ENCODE measurements at regions of chr18 and their contacts with region 1.

Region 1: GRCh38 chr18:46660955-46661749 is 4.1 kb upstream of the LOXHD1 start:
- DNase-seq: no peak
- H3K4me3 Mint-ChIP-seq: no peak overlapping the region
- H3K27ac Mint-ChIP-seq: no peak overlapping the region
- H3K4me1 Mint-ChIP-seq: no peaks in the 10 kb centered on the region
- H3K27me3 Mint-ChIP-seq: peaks cover 4% of the 10 kb centered on the region

Region 2: DNA sequence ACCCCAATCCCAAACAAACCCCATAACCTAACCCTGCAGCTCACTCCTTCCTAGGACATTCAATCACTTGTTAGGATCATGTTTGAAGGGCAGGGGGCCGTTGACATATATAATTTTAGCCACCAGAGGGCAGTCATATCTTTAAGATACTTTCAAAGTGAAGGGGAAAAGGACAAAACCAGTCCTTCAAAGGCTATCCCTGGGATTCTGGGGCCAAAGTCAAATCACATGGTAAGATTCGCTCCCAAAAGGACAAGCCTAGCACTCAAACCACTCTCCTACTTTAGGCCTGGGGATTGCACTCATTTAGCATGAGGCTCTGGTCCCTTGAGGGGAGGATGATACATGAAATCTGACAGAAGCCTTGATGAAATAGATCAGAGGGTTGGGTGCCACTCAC is 512.3 kb before region 1 on chr18:
- CTCF ChIA-PET with region 1: interaction called, 39 read pairs
- POLR2A ChIA-PET with region 1: interaction called, 6 read pairs
- DNase-seq: peak; percentile 60
- H3K4me3 Mint-ChIP-seq: no peak overlapping the region
- H3K27ac Mint-ChIP-seq: peak overlapping the region; percentile 45
- H3K4me1 Mint-ChIP-seq: peaks cover 34% of the 10 kb centered on the region
- H3K27me3 Mint-ChIP-seq: peaks cover 2% of the 10 kb centered on the region

Region 3: GRCh38 chr18:46555724-46556123 is 105.4 kb before region 1 on chr18:
- CTCF ChIA-PET with region 1: interaction called, 16 read pairs
- POLR2A ChIA-PET with region 1: no interaction called
- DNase-seq: no peak
- H3K4me3 Mint-ChIP-seq: no peak overlapping the region
- H3K27ac Mint-ChIP-seq: no peak overlapping the region
- H3K4me1 Mint-ChIP-seq: no peaks in the 10 kb centered on the region
- H3K27me3 Mint-ChIP-seq: no peaks in the 10 kb centered on the region

Region 4: DNA sequence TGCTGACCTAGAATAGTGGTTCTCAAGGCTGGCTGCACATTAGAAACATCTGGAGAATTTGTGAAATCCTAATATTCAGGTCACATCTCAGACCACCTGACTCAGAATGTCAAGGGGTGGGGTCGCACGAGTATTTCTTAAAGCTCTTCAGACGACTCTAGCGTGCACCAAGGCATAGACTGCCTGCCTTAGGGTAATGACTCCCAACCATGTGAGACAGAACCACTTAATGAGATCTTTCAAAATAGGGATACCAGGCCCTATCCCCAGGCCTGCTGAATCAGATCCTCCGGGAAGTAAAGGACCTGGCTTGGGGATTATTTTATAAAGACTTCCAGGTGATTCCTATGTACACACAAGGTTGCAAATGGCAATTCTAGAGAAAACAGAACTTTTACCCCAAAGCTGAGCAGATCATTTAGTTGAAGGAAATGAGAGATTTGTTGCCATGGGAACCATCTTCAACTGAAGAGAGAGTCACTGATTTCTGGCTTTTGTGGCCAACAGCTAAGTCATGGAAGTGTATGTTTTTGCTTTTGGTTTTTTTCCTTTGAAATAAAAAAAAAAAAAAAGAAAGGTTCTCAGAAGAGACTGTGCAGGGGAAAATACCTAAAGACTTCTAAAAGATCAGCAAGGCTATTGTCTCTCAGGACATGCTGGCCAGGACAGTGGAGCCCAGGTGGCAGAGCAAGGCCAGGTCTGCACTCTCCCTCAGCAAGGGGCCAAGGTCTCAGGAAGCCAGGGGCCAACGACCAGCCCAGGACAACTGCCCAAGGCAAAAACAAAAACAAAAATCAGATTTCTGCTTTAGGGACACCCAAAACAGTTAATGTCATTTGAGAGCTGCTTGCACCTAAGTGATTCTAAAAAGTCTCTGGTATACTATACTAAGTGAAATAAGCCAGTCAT is 11.2 kb after region 1 on chr18:
- CTCF ChIA-PET with region 1: interaction called, 22 read pairs
- POLR2A ChIA-PET with region 1: no interaction called
- DNase-seq: no peak
- H3K4me3 Mint-ChIP-seq: no peak overlapping the region
- H3K27ac Mint-ChIP-seq: no peak overlapping the region
- H3K4me1 Mint-ChIP-seq: peaks cover 12% of the 10 kb centered on the region
- H3K27me3 Mint-ChIP-seq: peaks cover 9% of the 10 kb centered on the region

Measured in activated CD4-positive, alpha-beta memory T cell treated with anti-CD3 and anti-CD28 coated beads, Interleukin-2, amount 10 ng/mL, durations not matched to agents 7 days and 5 days (primary cell).